BJ (cell line): ENCODE measurements at regions of chr21 and their contacts with region 1.

Region 1: GRCh38 chr21:38355992-38356797 is 99.4 kb downstream of the KCNJ15 start:
- DNase-seq: no peak
- H3K4me3 ChIP-seq: no peak overlapping the region
- H3K27me3 ChIP-seq: no peaks in the 10 kb centered on the region
- CTCF ChIP-seq: peak; percentile 99

Region 2: DNA sequence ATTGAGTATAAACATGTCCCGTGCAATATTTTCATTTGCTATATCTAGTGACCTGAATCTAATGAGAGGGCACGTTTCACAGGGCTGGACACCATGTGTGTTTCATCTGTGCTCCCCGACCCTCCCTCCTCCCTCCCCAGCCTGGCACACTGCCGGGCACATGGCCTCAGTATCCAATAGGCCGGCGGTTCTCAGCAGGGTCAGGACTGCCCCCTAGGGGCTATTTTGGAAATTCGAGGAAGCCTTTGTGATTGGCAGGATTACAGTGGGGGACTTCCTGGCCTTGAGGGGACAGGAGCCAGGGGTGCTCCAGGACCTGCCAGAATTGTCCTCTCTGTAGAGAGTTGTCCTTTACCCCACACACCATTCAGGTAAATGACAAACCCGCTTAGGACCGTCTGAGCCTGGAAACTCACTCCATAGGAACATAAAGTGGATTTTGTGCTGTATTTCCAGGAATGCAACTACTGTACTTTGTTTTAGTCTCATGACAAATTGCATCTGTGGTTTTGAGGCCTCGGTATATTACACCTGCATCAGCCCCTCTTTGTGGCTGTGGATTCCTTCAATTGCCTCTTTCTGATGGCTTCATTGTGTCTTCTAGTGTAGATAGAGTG is 1766.7 kb before region 1 on chr21:
- CTCF ChIA-PET with region 1: no interaction called
- POLR2A ChIA-PET with region 1: no interaction called
- DNase-seq: peak; percentile 1
- H3K4me3 ChIP-seq: no peak overlapping the region
- H3K27me3 ChIP-seq: peaks cover 2% of the 10 kb centered on the region
- CTCF ChIP-seq: peak; percentile 75

Region 3: DNA sequence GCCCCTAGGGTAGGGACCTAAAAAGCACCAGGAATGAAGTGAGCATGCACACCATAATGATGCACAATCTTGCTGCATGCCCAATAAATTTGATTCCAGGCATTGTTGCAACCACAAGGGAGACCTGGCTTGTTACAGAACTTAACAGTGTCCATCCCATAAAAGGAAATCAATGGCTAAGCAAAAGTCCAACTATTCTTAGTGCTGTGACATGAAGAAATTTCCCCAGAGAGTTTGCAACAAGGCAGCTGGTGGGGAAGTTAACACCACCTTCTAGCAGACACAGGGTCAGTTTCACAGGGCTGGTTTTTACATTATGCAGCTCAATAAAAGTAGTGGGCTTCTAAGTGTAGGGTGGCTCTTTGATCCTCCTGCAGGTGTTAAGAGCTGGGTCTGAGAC is 661.1 kb before region 1 on chr21:
- CTCF ChIA-PET with region 1: interaction called, 26 read pairs
- POLR2A ChIA-PET with region 1: no interaction called
- DNase-seq: no peak
- H3K4me3 ChIP-seq: no peak overlapping the region
- H3K27me3 ChIP-seq: peaks cover 5% of the 10 kb centered on the region
- CTCF ChIP-seq: no peak

Region 4: DNA sequence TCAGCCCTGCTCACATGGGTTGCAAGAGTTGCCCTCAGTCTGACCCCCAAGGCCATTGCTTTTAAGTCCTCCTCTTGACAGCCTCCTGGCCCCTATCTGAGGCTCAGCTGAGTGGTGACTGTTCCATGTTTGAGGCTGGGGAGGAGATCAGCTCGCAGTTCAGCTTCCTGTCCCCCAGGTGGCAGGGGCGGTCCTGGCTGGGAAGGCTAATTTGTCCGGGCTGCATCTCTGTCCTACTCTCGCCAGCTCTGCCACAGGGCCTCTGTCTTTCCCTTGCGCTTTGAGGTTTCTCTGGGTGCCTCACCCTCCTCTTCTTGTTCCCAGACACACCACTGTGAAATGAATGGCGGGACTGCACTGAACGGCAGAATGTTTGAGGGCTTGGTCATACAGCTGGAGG is 597.2 kb before region 1 on chr21:
- CTCF ChIA-PET with region 1: interaction called, 21 read pairs
- POLR2A ChIA-PET with region 1: no interaction called
- DNase-seq: no peak
- H3K4me3 ChIP-seq: no peak overlapping the region
- H3K27me3 ChIP-seq: peaks cover 4% of the 10 kb centered on the region
- CTCF ChIP-seq: peak; percentile 92

Region 5: DNA sequence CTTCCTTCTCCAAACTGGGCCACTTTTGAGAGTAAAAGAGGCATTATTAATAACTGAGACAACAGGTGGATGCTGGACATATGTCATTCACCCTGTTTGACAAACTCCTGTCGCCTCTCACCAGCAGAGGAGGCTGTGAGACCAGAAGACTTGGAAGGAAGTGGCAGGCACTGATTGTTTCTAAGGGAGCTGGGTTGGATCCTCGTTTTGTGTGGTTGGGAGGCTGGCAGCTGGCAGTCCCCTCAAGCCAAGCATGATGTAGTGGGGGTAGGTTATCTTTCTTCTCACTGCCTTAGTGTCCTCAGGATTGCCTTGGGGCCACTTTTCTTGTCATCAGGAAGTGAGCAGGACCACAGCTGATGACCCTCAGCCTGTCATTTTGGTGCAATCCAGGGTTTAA is 185.9 kb before region 1 on chr21:
- CTCF ChIA-PET with region 1: interaction called, 263 read pairs
- POLR2A ChIA-PET with region 1: no interaction called
- DNase-seq: no peak
- H3K4me3 ChIP-seq: no peak overlapping the region
- H3K27me3 ChIP-seq: no peaks in the 10 kb centered on the region
- CTCF ChIP-seq: 0 out of 2 replicates have a peak, but pooled peaks have one; percentile 26

Region 6: GRCh38 chr21:38219049-38219628 is 137.1 kb before region 1 on chr21:
- CTCF ChIA-PET with region 1: interaction called, 245 read pairs
- POLR2A ChIA-PET with region 1: no interaction called
- DNase-seq: peak; percentile 6
- H3K4me3 ChIP-seq: no peak overlapping the region
- H3K27me3 ChIP-seq: no peaks in the 10 kb centered on the region
- CTCF ChIP-seq: peak; percentile 94

Region 7: DNA sequence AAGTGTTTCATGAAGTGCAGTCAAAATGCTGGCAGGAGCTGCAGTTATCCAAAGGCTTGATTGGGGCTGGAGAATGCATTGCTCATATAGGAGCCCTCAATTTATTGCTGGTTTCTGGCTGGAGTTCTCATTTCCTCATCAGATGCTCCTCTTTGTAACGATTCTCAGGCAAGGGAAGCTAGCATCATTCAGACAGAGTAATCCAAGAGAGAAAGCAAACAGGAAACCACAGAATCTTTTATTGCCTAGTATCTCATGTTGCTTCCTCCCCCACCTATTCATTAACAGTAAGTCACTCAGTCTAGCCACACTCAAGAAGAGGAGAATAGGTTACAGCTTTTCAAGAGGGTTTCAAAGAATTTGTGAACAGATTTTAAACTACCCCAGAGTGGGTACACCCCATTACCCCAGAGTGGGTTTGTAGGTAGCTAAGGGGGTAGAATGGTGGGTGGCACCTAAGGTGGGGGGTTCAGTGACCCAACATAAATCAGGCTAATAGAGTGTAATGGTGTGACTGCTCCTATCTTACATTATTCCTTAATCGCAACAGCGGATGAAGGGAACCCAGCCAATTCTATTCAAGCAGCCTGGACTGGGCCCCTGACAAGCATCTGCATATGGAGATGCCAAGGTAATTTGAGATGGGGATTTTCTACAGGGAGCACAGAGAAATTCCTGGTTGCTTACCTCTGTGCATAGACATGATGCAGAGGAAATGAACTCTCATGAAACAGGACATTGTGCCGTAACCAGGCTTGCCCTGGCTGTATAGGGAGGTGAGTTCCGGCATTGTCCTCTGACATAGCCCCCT is 32.3 kb before region 1 on chr21:
- CTCF ChIA-PET with region 1: interaction called, 18 read pairs
- POLR2A ChIA-PET with region 1: no interaction called
- DNase-seq: peak; percentile 96
- H3K4me3 ChIP-seq: no peak overlapping the region
- H3K27me3 ChIP-seq: no peaks in the 10 kb centered on the region
- CTCF ChIP-seq: no peak

Region 8: GRCh38 chr21:38438476-38438893 is 82.3 kb after region 1 on chr21:
- CTCF ChIA-PET with region 1: no interaction called
- POLR2A ChIA-PET with region 1: no interaction called
- DNase-seq: peak; percentile 51
- H3K4me3 ChIP-seq: no peak overlapping the region
- H3K27me3 ChIP-seq: no peaks in the 10 kb centered on the region
- CTCF ChIP-seq: no peak

Region 9: GRCh38 chr21:38596264-38597042 is 240.3 kb after region 1 on chr21:
- CTCF ChIA-PET with region 1: no interaction called
- POLR2A ChIA-PET with region 1: no interaction called
- DNase-seq: no peak
- H3K4me3 ChIP-seq: no peak overlapping the region
- H3K27me3 ChIP-seq: peaks cover 12% of the 10 kb centered on the region
- CTCF ChIP-seq: no peak